PC-3 (cell line): ENCODE measurements at regions of chr1 and their contacts with region 1.

Region 1: GRCh38 chr1:247131236-247131635 is 27.1 kb upstream of the ZNF669 start:
- DNase-seq: no peak
- ATAC-seq: no peak
- H3K4me3 ChIP-seq: no peak overlapping the region
- H3K27ac ChIP-seq: no peak overlapping the region
- H3K4me1 ChIP-seq: no peaks in the 10 kb centered on the region; the same call in 1 of the 2 replicates
- H3K27me3 ChIP-seq: no peaks in the 10 kb centered on the region
- CTCF ChIP-seq: no peak

Region 2: DNA sequence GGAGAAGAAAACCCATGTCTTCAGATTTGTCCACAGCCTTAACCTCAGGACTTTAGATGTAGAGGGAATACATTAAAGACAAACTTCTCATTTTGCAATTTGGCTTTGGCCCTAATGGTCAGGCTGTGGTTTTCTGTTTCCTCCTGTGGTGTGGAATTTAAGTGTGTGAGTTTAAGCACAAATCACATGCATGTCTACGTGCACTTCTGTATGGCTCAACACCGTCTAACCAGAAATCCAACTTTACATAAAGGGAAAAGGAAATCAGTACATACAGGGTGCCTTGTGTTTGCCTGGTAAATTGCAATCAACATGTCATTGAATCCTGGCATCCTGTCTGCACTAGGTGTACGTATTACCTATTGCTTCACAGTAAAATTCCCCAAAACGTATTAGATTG is 41.8 kb after region 1 on chr1:
- CTCF ChIA-PET with region 1: no interaction called
- POLR2A ChIA-PET with region 1: no interaction called
- intact Hi-C with region 1: loop called (anchors 2 kb)
- DNase-seq: no peak
- ATAC-seq: no peak
- H3K4me3 ChIP-seq: no peak overlapping the region
- H3K27ac ChIP-seq: no peak overlapping the region
- H3K4me1 ChIP-seq: no peaks in the 10 kb centered on the region
- H3K27me3 ChIP-seq: no peaks in the 10 kb centered on the region
- CTCF ChIP-seq: no peak

Region 3: DNA sequence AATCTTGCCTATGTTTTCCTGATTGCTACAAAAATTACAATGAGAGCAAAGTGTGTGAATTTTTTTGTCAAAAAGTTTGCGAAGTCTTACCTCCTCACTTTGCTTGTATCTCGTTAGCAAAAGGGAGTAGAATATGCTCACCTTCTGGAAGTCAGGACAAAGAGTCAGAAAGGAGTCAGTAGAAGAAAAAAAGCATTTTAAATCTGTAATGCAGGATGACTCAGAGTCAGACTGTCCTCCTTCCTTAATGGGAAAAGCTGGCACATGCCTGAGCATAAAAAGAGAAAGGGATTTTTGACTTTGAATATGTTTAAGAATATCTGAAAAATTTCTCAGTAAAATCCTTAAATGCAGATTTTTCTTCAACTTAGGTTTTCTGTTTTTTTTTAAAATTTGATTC is 110.5 kb after region 1 on chr1:
- CTCF ChIA-PET with region 1: no interaction called
- POLR2A ChIA-PET with region 1: no interaction called
- intact Hi-C with region 1: no loop called
- DNase-seq: peak; percentile 40
- ATAC-seq: peak; percentile 68
- H3K4me3 ChIP-seq: no peak overlapping the region
- H3K27ac ChIP-seq: no peak overlapping the region
- H3K4me1 ChIP-seq: no peaks in the 10 kb centered on the region
- H3K27me3 ChIP-seq: no peaks in the 10 kb centered on the region
- CTCF ChIP-seq: no peak